Caco-2 (cell line): ENCODE measurements at regions of chr3 and their contacts with region 1.

Region 1: GRCh38 chr3:121545574-121546455 is at the start of gene POLQ:
- DNase-seq: peak; percentile 88 to 89
- H3K4me3 ChIP-seq: peak within 1 kb of the TSS; percentile 72
- H3K4me3 Mint-ChIP-seq: peak within 1 kb of the TSS; percentile 90
- H3K27ac Mint-ChIP-seq: peak within 1 kb of the TSS; percentile 92
- H3K4me1 ChIP-seq: peaks cover 5% of the 10 kb centered on the region
- H3K4me1 Mint-ChIP-seq: no peaks in the 10 kb centered on the region
- H3K27me3 ChIP-seq: no peaks in the 10 kb centered on the region
- H3K27me3 Mint-ChIP-seq: no peaks in the 10 kb centered on the region
- CTCF ChIP-seq: no peak
- total RNA-seq, gene POLQ: 15.4 and 17.2 TPM in 2 replicates

Region 2: GRCh38 chr3:121660356-121661171 is 114.7 kb after region 1 on chr3 and contains the start of gene HCLS1:
- CTCF ChIA-PET with region 1: interaction called, 6 read pairs
- POLR2A ChIA-PET with region 1: no interaction called
- intact Hi-C with region 1: loop called (anchors 5 kb)
- DNase-seq: no peak
- H3K4me3 ChIP-seq: no peak within 1 kb of the TSS
- H3K4me3 Mint-ChIP-seq: no peak within 1 kb of the TSS
- H3K27ac Mint-ChIP-seq: peak within 1 kb of the TSS; percentile 22
- H3K4me1 ChIP-seq: peaks cover 45% of the 10 kb centered on the region
- H3K4me1 Mint-ChIP-seq: peaks cover 29% of the 10 kb centered on the region
- H3K27me3 ChIP-seq: no peaks in the 10 kb centered on the region
- H3K27me3 Mint-ChIP-seq: no peaks in the 10 kb centered on the region
- CTCF ChIP-seq: no peak
- total RNA-seq, gene HCLS1: 0.45 and 1.00 TPM in 2 replicates

Region 3: GRCh38 chr3:121834696-121835464 is 289.1 kb after region 1 on chr3 and contains the starts of genes EAF2 and IQCB1:
- CTCF ChIA-PET with region 1: no interaction called
- POLR2A ChIA-PET with region 1: no interaction called
- intact Hi-C with region 1: loop called (anchors 2 kb)
- DNase-seq: peak; percentile 95 to 96
- H3K4me3 ChIP-seq: peak within 1 kb of the TSS; percentile 66
- H3K4me3 Mint-ChIP-seq: peak within 1 kb of the TSS; percentile 93
- H3K27ac Mint-ChIP-seq: peak within 1 kb of the TSS; percentile 68
- H3K4me1 ChIP-seq: peaks cover 7% of the 10 kb centered on the region
- H3K4me1 Mint-ChIP-seq: peaks cover 12% of the 10 kb centered on the region
- H3K27me3 ChIP-seq: no peaks in the 10 kb centered on the region
- H3K27me3 Mint-ChIP-seq: peaks cover 3% of the 10 kb centered on the region
- CTCF ChIP-seq: no peak
- total RNA-seq, gene EAF2: 4.5 and 4.6 TPM in 2 replicates
- total RNA-seq, gene IQCB1: 36.1 and 36.4 TPM in 2 replicates

Region 4: GRCh38 chr3:121989943-121990342 is 444.1 kb after region 1 on chr3:
- CTCF ChIA-PET with region 1: interaction called, 11 read pairs
- POLR2A ChIA-PET with region 1: no interaction called
- intact Hi-C with region 1: loop called (anchors 1 kb)
- DNase-seq: peak; percentile 66 to 82
- H3K4me3 ChIP-seq: no peak overlapping the region
- H3K4me3 Mint-ChIP-seq: no peak overlapping the region
- H3K27ac Mint-ChIP-seq: peak overlapping the region; percentile 36
- H3K4me1 ChIP-seq: peaks cover 22% of the 10 kb centered on the region
- H3K4me1 Mint-ChIP-seq: peaks cover 19% of the 10 kb centered on the region
- H3K27me3 ChIP-seq: no peaks in the 10 kb centered on the region
- H3K27me3 Mint-ChIP-seq: no peaks in the 10 kb centered on the region
- CTCF ChIP-seq: peak in 1 of 2 experiments; percentile 28

Region 5: DNA sequence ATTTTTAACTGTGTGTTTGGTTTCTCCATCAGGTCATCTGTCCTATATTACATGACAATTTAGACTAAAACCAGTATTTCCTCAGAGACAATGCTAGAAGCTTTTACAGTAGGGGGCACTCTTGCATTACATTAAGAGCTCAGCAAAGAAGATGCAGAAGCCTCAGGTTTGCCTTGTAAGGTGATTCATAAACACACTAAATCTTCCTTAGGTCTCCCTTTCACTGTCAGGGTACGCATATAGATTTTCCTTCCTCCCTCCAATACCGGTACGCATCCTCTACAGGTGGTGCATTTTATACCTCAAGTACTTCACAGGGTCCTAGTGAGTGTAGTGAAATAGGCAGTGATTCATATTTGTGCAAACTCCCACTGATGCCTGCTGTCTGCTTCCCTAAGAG is 555.8 kb after region 1 on chr3:
- CTCF ChIA-PET with region 1: no interaction called
- POLR2A ChIA-PET with region 1: no interaction called
- intact Hi-C with region 1: loop called (anchors 5 kb)
- DNase-seq: peak in 1 of 2 experiments; percentile 46
- H3K4me3 ChIP-seq: no peak overlapping the region
- H3K4me3 Mint-ChIP-seq: no peak overlapping the region
- H3K27ac Mint-ChIP-seq: no peak overlapping the region
- H3K4me1 ChIP-seq: peaks cover 21% of the 10 kb centered on the region
- H3K4me1 Mint-ChIP-seq: no peaks in the 10 kb centered on the region
- H3K27me3 ChIP-seq: no peaks in the 10 kb centered on the region
- H3K27me3 Mint-ChIP-seq: no peaks in the 10 kb centered on the region
- CTCF ChIP-seq: peak; percentile 16 to 44

Region 6: GRCh38 chr3:122305818-122306621 is 760.2 kb after region 1 on chr3:
- CTCF ChIA-PET with region 1: interaction called, 4 read pairs
- POLR2A ChIA-PET with region 1: no interaction called
- intact Hi-C with region 1: loop called (anchors 2 kb)
- DNase-seq: peak; percentile 43 to 48
- H3K4me3 ChIP-seq: no peak overlapping the region
- H3K4me3 Mint-ChIP-seq: peak overlapping the region; percentile 19
- H3K27ac Mint-ChIP-seq: no peak overlapping the region
- H3K4me1 ChIP-seq: 0 out of 2 replicates have a peak, but pooled peaks cover 2% of the 10 kb centered on the region
- H3K4me1 Mint-ChIP-seq: no peaks in the 10 kb centered on the region
- H3K27me3 ChIP-seq: no peaks in the 10 kb centered on the region
- H3K27me3 Mint-ChIP-seq: no peaks in the 10 kb centered on the region
- CTCF ChIP-seq: peak in 1 of 2 experiments; percentile 54

Region 7: GRCh38 chr3:122383771-122384697 is 838.2 kb after region 1 on chr3 and contains the start of gene FAM162A:
- CTCF ChIA-PET with region 1: interaction called, 3 read pairs
- POLR2A ChIA-PET with region 1: no interaction called
- intact Hi-C with region 1: loop called (anchors 5 kb)
- DNase-seq: peak; percentile 95 to 97
- H3K4me3 ChIP-seq: peak within 1 kb of the TSS; percentile 77
- H3K4me3 Mint-ChIP-seq: peak within 1 kb of the TSS; percentile 97
- H3K27ac Mint-ChIP-seq: peak within 1 kb of the TSS; percentile 95
- H3K4me1 ChIP-seq: peaks cover 7% of the 10 kb centered on the region; the same call in 1 of the 2 replicates
- H3K4me1 Mint-ChIP-seq: no peaks in the 10 kb centered on the region
- H3K27me3 ChIP-seq: no peaks in the 10 kb centered on the region
- H3K27me3 Mint-ChIP-seq: no peaks in the 10 kb centered on the region
- CTCF ChIP-seq: peak; percentile 42 to 74
- total RNA-seq, gene FAM162A: 35.8 and 37.4 TPM in 2 replicates